ENCODE measurements at regions of chr5 and their contacts with region 1.

Region 1: GRCh38 chr5:95835682-95836385 is 13.3 kb upstream of the GLRX start:
- DNase-seq: peak in 10 of 14 experiments; percentile 38 to 70 (median 56)
- ATAC-seq: peak; percentile 37
- H3K4me3 ChIP-seq: peak overlapping the region; percentile 71
- H3K4me3 Mint-ChIP-seq: peak overlapping the region; percentile 83
- H3K27ac ChIP-seq: peak overlapping the region; percentile 66 to 79
- H3K27ac Mint-ChIP-seq: peak overlapping the region; percentile 79
- H3K4me1 ChIP-seq: peaks cover 32% of the 10 kb centered on the region
- H3K4me1 Mint-ChIP-seq: peaks cover 54% of the 10 kb centered on the region
- H3K27me3 ChIP-seq: no peaks in the 10 kb centered on the region
- H3K27me3 Mint-ChIP-seq: no peaks in the 10 kb centered on the region
- CTCF ChIP-seq: no peak

Region 2: GRCh38 chr5:95808686-95809413 is 27.0 kb before region 1 on chr5:
- CTCF ChIA-PET with region 1: interaction called, 7 read pairs
- POLR2A ChIA-PET with region 1: interaction called, 22 read pairs
- intact Hi-C with region 1: loop called (anchors 5 kb)
- DNase-seq: peak; percentile 59 to 94 (median 76)
- ATAC-seq: peak; percentile 100
- H3K4me3 ChIP-seq: peak overlapping the region; percentile 9
- H3K4me3 Mint-ChIP-seq: peak overlapping the region; percentile 26
- H3K27ac ChIP-seq: peak overlapping the region; percentile 63 to 79
- H3K27ac Mint-ChIP-seq: peak overlapping the region; percentile 76
- H3K4me1 ChIP-seq: peaks cover 59% of the 10 kb centered on the region
- H3K4me1 Mint-ChIP-seq: peaks cover 65% of the 10 kb centered on the region
- H3K27me3 ChIP-seq: no peaks in the 10 kb centered on the region
- H3K27me3 Mint-ChIP-seq: no peaks in the 10 kb centered on the region
- CTCF ChIP-seq: no peak

Region 3: GRCh38 chr5:95817440-95817839 is 18.4 kb before region 1 on chr5:
- CTCF ChIA-PET with region 1: interaction called, 35 read pairs
- POLR2A ChIA-PET with region 1: interaction called, 96 read pairs
- intact Hi-C with region 1: loop called (anchors 2 kb)
- DNase-seq: peak in 6 of 14 experiments; percentile 28 to 73 (median 58)
- ATAC-seq: peak; percentile 24
- H3K4me3 ChIP-seq: peak overlapping the region; percentile 84
- H3K4me3 Mint-ChIP-seq: peak overlapping the region; percentile 98
- H3K27ac ChIP-seq: peak overlapping the region; percentile 49 to 70
- H3K27ac Mint-ChIP-seq: peak overlapping the region; percentile 83
- H3K4me1 ChIP-seq: peaks cover 71% of the 10 kb centered on the region
- H3K4me1 Mint-ChIP-seq: peaks cover 81% of the 10 kb centered on the region
- H3K27me3 ChIP-seq: no peaks in the 10 kb centered on the region
- H3K27me3 Mint-ChIP-seq: no peaks in the 10 kb centered on the region
- CTCF ChIP-seq: no peak

Region 4: DNA sequence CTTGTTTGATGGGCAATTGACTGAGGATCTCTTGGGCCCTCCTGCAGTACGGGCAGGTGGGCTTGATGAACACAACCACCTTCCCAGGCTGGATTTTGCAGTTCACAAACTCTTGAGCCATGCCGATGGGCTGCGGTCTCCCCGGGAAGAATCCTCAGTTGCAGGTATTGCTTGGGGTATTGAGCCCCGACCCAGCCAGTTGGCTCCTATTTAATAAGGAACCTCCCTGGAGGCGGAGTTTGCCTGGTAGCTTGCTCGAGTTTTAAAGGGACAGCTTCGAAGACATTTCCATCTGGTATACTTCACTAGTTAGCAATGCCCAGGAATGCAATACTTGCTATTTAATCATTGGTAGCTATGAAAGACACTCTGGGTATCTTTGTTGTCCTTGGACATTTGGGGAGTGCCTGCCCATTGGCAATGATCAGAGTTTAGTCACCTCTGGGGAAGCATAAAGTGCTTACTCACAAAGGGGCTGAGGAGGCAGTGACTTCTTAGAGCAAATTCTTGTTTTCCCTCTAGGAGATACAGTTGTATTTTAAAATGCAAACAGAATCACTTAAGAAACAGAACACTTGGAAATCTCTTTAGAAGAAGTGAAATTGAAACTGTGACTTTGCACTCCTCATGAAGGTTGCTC is 13.2 kb before region 1 on chr5 and contains the start of gene GLRX:
- CTCF ChIA-PET with region 1: interaction called, 35 read pairs
- POLR2A ChIA-PET with region 1: interaction called, 96 read pairs
- intact Hi-C with region 1: loop called (anchors 2 kb)
- DNase-seq: peak; percentile 22 to 76 (median 50)
- ATAC-seq: peak; percentile 39
- H3K4me3 ChIP-seq: peak within 1 kb of the TSS; percentile 84
- H3K4me3 Mint-ChIP-seq: peak within 1 kb of the TSS; percentile 98
- H3K27ac ChIP-seq: peak within 1 kb of the TSS; percentile 84 to 86
- H3K27ac Mint-ChIP-seq: peak within 1 kb of the TSS; percentile 83
- H3K4me1 ChIP-seq: peaks cover 64% of the 10 kb centered on the region
- H3K4me1 Mint-ChIP-seq: peaks cover 73% of the 10 kb centered on the region
- H3K27me3 ChIP-seq: no peaks in the 10 kb centered on the region
- H3K27me3 Mint-ChIP-seq: no peaks in the 10 kb centered on the region
- CTCF ChIP-seq: no peak
- total RNA-seq, gene GLRX: 16.9 to 18.7 TPM

Measured in CD4-positive, alpha-beta T cell (primary cell).